B cell (primary cell): ENCODE measurements at regions of chr19 and their contacts with region 1.

Region 1: DNA sequence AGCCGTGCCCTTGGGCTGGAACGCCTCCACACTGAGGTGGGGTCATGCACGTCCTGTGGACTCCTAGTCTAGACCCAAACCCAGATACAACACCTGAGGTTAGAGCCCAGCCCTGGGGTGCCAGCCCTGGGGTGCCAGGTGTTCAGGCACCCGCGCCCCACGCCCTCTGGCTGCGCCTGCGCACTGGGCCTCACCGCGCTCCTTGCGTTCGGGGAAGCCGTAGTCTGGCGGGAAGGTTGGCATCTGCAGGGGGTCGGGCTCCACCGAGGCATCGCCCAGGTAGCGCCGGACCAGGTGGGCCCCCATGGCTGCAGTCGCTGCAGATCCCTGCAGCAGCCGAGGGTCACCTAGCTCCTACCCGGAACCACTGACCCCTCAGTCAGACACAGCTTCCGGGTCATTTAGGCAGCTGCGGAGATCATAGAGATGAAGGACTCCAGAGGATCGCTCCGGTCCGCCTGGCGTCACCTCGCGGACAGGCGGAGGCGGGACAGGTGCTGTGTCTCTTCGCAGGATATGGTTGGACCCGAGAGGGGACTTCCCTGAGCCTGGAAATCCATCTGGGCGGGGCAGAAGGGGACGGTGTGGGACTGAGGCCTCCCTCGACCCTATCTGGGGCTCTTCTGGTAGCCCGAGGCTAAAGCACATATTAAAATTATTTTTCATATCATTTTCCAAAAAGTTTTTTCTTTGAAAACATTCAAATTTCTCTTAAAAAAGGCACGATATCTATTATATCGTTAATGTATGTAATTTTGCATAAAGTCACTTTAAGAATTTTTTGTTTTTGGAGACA is at the start of gene NDUFB7:
- DNase-seq: peak; percentile 96
- ATAC-seq: peak; percentile 85
- H3K4me3 ChIP-seq: peak within 1 kb of the TSS; percentile 56 to 97 (median 93)
- H3K4me3 Mint-ChIP-seq: peak within 1 kb of the TSS; percentile 97
- H3K27ac ChIP-seq: peak within 1 kb of the TSS; percentile 42 to 45
- H3K27ac Mint-ChIP-seq: peak within 1 kb of the TSS; percentile 93
- H3K4me1 ChIP-seq: peaks cover 29 to 46% of the 10 kb centered on the region in 2 donors
- H3K4me1 Mint-ChIP-seq: peaks cover 52% of the 10 kb centered on the region
- H3K27me3 ChIP-seq: no peaks in the 10 kb centered on the region
- H3K27me3 Mint-ChIP-seq: no peaks in the 10 kb centered on the region
- CTCF ChIP-seq: peak; percentile 85
- total RNA-seq, gene NDUFB7: 71.5 and 72.4 TPM in 2 replicates

Region 2: GRCh38 chr19:14117668-14118164 is 454.2 kb before region 1 on chr19 and contains the start of gene PRKACA:
- CTCF ChIA-PET with region 1: no interaction called
- POLR2A ChIA-PET with region 1: no interaction called
- intact Hi-C with region 1: no loop called
- DNase-seq: peak; percentile 98
- ATAC-seq: peak; percentile 93
- H3K4me3 ChIP-seq: peak within 1 kb of the TSS; percentile 54 to 74 (median 66)
- H3K4me3 Mint-ChIP-seq: peak within 1 kb of the TSS; percentile 94
- H3K27ac ChIP-seq: peak within 1 kb of the TSS; percentile 24 to 77
- H3K27ac Mint-ChIP-seq: peak within 1 kb of the TSS; percentile 87
- H3K4me1 ChIP-seq: peaks cover 36 to 38% of the 10 kb centered on the region in 2 donors
- H3K4me1 Mint-ChIP-seq: peaks cover 39% of the 10 kb centered on the region
- H3K27me3 ChIP-seq: no peaks in the 10 kb centered on the region
- H3K27me3 Mint-ChIP-seq: no peaks in the 10 kb centered on the region
- CTCF ChIP-seq: no peak
- total RNA-seq, gene PRKACA: 43.0 and 48.8 TPM in 2 replicates

Region 3: DNA sequence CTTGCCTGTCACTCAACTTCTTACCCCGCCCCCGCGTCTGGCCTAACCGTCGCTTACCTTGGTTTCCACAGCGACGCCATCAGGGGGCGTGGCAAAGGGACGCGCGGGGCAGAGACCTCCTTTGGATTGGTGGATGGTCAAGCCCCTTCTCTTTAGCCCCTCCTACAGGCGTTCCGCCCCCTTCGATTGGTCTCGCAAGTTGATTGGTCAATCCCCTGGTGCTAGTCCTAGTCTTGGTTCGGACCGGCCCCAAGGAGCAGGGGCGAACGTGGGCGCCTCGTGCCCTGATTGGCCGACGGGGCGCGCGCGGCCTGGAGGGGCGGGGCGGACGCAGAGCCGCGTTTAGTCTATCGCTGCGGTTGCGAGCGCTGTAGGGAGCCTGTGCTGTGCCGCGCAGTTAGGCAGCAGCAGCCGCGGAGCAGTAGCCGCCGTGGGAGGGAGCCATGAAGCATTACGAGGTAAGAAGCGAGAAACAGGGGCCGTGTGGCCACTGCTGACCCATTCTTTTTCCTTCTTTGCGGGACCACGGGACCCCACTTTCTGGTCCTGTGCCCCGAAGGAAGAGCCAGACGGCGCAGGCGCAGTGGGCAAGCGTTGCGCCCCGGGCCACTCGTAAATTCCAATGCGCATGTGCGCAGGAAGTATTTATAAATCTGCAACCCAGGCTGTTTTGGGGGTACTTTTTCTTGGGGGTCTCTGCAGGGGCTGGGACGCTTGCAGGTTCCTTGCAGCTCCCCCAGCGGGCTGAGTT is 42.5 kb before region 1 on chr19 and contains the start of gene TECR:
- CTCF ChIA-PET with region 1: interaction called, 3 read pairs
- POLR2A ChIA-PET with region 1: interaction called, 4 read pairs
- intact Hi-C with region 1: loop called (anchors 1 kb)
- DNase-seq: peak; percentile 100
- ATAC-seq: peak; percentile 97
- H3K4me3 ChIP-seq: peak within 1 kb of the TSS; percentile 64 to 95 (median 72)
- H3K4me3 Mint-ChIP-seq: peak within 1 kb of the TSS; percentile 91
- H3K27ac ChIP-seq: peak within 1 kb of the TSS; percentile 56 to 86
- H3K27ac Mint-ChIP-seq: peak within 1 kb of the TSS; percentile 95
- H3K4me1 ChIP-seq: peaks cover 13 to 22% of the 10 kb centered on the region in 2 donors
- H3K4me1 Mint-ChIP-seq: peaks cover 29% of the 10 kb centered on the region
- H3K27me3 ChIP-seq: no peaks in the 10 kb centered on the region
- H3K27me3 Mint-ChIP-seq: no peaks in the 10 kb centered on the region
- CTCF ChIP-seq: no peak
- total RNA-seq, gene TECR: 68.9 and 72.4 TPM in 2 replicates

Region 4: DNA sequence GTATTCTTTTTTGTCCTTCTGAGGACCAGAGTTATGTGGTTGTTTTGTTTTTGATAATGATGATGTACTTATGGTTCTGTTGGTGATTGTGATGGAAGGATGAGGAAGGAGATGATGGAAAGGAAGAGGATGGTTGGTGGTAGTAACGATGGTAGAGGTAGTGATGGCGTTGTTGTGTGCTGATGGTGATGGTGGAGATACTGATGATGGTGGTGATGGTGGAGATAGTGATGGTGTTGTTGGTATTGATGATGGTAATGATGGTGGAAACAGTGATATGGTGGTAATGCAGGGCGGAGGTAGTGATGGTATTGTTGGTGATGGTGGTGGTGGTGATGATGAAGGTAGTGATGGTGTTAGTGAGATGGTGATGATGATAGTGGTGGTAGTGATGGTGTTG is 23.6 kb after region 1 on chr19:
- CTCF ChIA-PET with region 1: interaction called, 10 read pairs
- POLR2A ChIA-PET with region 1: no interaction called
- intact Hi-C with region 1: no loop called
- DNase-seq: no peak
- ATAC-seq: no peak
- H3K4me3 ChIP-seq: no peak overlapping the region
- H3K4me3 Mint-ChIP-seq: peak overlapping the region; percentile 57
- H3K27ac ChIP-seq: peak overlapping the region in 1 of 2 donors; percentile 42
- H3K27ac Mint-ChIP-seq: peak overlapping the region; percentile 29
- H3K4me1 ChIP-seq: peaks cover 40 to 46% of the 10 kb centered on the region in 2 donors
- H3K4me1 Mint-ChIP-seq: peaks cover 45% of the 10 kb centered on the region
- H3K27me3 ChIP-seq: no peaks in the 10 kb centered on the region
- H3K27me3 Mint-ChIP-seq: no peaks in the 10 kb centered on the region
- CTCF ChIP-seq: no peak

Region 5: GRCh38 chr19:14614099-14614412 is 42.2 kb after region 1 on chr19:
- CTCF ChIA-PET with region 1: interaction called, 54 read pairs
- POLR2A ChIA-PET with region 1: interaction called, 3 read pairs
- intact Hi-C with region 1: loop called (anchors 1 kb)
- DNase-seq: peak; percentile 91
- ATAC-seq: peak; percentile 88
- H3K4me3 ChIP-seq: peak overlapping the region in 1 of 5 experiments; percentile 38
- H3K4me3 Mint-ChIP-seq: peak overlapping the region; percentile 89
- H3K27ac ChIP-seq: peak overlapping the region; percentile 91 to 92
- H3K27ac Mint-ChIP-seq: peak overlapping the region; percentile 99
- H3K4me1 ChIP-seq: peaks cover 53 to 64% of the 10 kb centered on the region in 2 donors
- H3K4me1 Mint-ChIP-seq: peaks cover 49% of the 10 kb centered on the region
- H3K27me3 ChIP-seq: no peaks in the 10 kb centered on the region
- H3K27me3 Mint-ChIP-seq: no peaks in the 10 kb centered on the region
- CTCF ChIP-seq: peak; percentile 25

Region 6: GRCh38 chr19:14689598-14690503 is 118.0 kb after region 1 on chr19 and contains the start of gene ZNF333:
- CTCF ChIA-PET with region 1: interaction called, 681 read pairs
- POLR2A ChIA-PET with region 1: interaction called, 90 read pairs
- intact Hi-C with region 1: loop called (anchors 1 kb)
- DNase-seq: peak; percentile 98
- ATAC-seq: peak; percentile 89
- H3K4me3 ChIP-seq: peak within 1 kb of the TSS; percentile 68 to 82 (median 75)
- H3K4me3 Mint-ChIP-seq: peak within 1 kb of the TSS; percentile 95
- H3K27ac ChIP-seq: peak within 1 kb of the TSS; percentile 97 to 99
- H3K27ac Mint-ChIP-seq: peak within 1 kb of the TSS; percentile 99
- H3K4me1 ChIP-seq: peaks cover 27 to 29% of the 10 kb centered on the region in 2 donors
- H3K4me1 Mint-ChIP-seq: peaks cover 30% of the 10 kb centered on the region
- H3K27me3 ChIP-seq: no peaks in the 10 kb centered on the region
- H3K27me3 Mint-ChIP-seq: no peaks in the 10 kb centered on the region
- CTCF ChIP-seq: no peak
- total RNA-seq, gene ZNF333: 36.9 and 39.4 TPM in 2 replicates

Region 7: DNA sequence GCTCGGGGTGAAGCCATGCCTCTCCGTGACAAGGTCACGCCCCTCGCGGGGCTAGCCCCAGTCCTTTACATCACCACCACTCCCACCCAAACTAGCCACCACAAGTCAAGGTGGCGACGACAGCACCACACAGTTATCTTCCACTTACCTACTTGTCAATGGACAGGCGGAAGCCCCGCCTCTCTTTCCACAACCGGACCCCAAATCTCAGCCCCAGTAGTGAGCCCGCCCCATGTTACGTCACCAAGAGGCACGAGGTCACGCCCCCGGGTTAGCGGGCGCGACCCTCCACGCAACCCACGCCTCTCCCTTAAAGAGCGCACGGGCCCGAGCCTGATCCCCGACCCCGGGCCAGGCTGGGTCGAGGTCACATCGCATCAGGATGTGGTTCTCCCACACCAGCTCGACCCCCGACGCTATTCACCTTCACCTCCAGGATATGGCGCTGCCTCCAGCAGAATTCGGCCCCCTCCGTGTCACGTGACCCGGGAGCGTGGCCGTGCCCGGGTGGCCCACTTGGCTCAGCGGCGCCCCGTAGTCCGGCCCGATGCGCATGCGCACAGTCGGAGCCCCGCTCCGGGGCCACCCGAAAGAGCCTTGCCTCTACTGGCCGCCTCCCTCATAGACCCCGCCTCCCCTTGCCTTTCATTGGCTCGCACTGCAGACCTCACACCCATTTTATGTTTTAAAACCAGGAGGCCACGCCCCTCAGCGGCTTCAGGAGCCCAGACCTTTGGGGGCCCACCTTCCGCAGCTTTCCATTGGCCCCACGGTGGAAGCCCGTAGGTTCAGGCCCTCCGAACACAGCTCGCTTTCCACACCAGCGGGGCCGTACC is 553.6 kb after region 1 on chr19:
- CTCF ChIA-PET with region 1: no interaction called
- POLR2A ChIA-PET with region 1: no interaction called
- intact Hi-C with region 1: loop called (anchors 10 kb)
- DNase-seq: peak; percentile 99
- ATAC-seq: peak; percentile 84
- H3K4me3 ChIP-seq: peak overlapping the region; percentile 60 to 87 (median 85)
- H3K4me3 Mint-ChIP-seq: peak overlapping the region; percentile 98
- H3K27ac ChIP-seq: peak overlapping the region; percentile 87 to 97
- H3K27ac Mint-ChIP-seq: peak overlapping the region; percentile 97
- H3K4me1 ChIP-seq: peaks cover 10 to 12% of the 10 kb centered on the region in 2 donors
- H3K4me1 Mint-ChIP-seq: peaks cover 19% of the 10 kb centered on the region
- H3K27me3 ChIP-seq: no peaks in the 10 kb centered on the region
- H3K27me3 Mint-ChIP-seq: peaks cover 9% of the 10 kb centered on the region
- CTCF ChIP-seq: no peak